Activated CD8-positive, alpha-beta T cell treated with anti-CD3 and anti-CD28 coated beads, Interleukin-2, amount 10 ng/mL, durations not matched to agents 7 days and 5 days (primary cell): ENCODE measurements at regions of chr18 and their contacts with region 1.

Region 1: DNA sequence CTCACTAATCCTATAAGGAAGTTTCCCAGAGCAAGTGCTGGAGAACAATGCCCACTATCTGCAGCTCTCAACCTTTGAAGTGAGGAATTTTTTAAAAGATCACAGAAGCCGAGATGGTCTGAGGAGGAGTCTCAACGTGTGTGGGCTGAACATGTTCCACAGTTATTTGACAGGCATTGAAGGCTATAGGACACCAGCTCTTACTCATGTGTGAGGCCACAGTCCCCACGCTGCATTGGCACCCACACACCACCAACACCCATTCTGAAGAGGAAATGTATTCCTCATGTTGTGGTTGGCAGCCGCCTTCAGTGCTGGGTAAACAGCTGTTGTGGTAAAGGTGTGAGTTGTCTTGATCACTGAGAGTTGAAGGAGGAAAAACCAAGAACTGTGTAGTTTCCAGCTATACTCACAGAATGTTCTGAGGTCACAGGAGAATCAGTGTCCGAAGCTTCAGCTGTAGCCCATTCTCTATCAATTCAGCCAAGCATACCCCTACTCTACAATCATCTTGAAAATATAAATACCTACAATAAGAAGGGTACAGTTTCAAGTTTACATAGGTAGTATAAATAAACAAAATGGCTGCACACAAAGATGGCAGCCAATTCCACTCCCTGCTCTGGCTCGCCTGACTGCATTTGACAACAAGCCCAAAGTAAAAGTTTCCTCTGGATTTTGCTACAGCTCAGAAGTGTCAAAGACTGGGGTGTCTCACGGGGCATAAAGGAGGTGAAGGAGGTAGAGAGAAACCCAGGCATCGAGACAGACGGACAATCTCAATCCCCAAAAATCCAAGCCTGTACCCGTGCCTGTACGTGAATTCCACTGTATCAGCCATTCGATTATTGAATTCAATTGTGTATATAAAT is 12.1 kb downstream of the CD226 start:
- DNase-seq: peak; percentile 90
- ATAC-seq: peak; percentile 96
- H3K4me3 Mint-ChIP-seq: no peak overlapping the region
- H3K27ac Mint-ChIP-seq: no peak overlapping the region
- H3K4me1 Mint-ChIP-seq: peaks cover 16% of the 10 kb centered on the region
- H3K27me3 Mint-ChIP-seq: no peaks in the 10 kb centered on the region

Region 2: DNA sequence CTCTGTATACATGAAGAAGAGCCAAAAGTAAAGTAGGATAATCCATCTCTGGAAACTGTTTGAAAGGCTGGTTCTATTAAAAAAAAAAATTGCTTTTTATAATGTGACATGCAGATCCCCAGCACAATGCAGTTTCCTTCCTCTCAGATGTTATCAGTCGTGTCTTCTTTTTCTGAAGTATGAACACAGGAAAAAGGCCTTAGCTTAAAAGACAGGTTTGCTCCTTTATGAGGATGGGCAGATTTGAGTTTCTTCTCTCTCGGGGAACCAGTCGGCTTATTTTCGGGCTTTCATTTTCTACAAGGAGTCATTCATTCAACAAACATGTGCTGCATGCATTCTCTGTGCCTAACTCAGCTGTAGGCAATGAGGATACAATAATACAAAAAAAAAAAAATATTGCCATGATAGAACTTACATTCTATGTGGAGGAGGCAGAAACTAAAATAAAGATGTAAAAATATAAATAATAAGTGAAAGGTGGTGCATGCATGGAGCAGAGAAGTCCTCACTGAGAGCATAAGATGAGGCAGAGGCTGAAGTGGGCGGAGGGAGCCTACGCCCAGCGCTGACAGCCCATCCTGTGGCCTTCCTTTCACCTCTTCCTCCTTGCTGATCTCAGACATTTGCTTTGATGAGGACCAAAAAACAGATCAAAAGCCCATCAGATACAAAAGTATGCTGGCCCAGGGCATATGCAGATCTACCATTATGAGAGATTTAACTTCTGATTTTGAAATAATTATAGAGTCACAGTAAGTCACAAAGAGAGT is 12.0 kb after region 1 on chr18 and contains the start of gene CD226:
- CTCF ChIA-PET with region 1: interaction called, 33 read pairs
- POLR2A ChIA-PET with region 1: interaction called, 22 read pairs
- DNase-seq: peak; percentile 67
- ATAC-seq: peak; percentile 74
- H3K4me3 Mint-ChIP-seq: no peak within 1 kb of the TSS
- H3K27ac Mint-ChIP-seq: no peak within 1 kb of the TSS
- H3K4me1 Mint-ChIP-seq: peaks cover 45% of the 10 kb centered on the region
- H3K27me3 Mint-ChIP-seq: no peaks in the 10 kb centered on the region
- total RNA-seq, gene CD226: 47.6 to 52.2 TPM

Region 3: GRCh38 chr18:69958422-69958821 is 22.9 kb after region 1 on chr18:
- CTCF ChIA-PET with region 1: interaction called, 11 read pairs
- POLR2A ChIA-PET with region 1: interaction called, 15 read pairs
- DNase-seq: no peak
- ATAC-seq: no peak
- H3K4me3 Mint-ChIP-seq: peak overlapping the region; percentile 3
- H3K27ac Mint-ChIP-seq: peak overlapping the region; percentile 50
- H3K4me1 Mint-ChIP-seq: peaks cover 25% of the 10 kb centered on the region
- H3K27me3 Mint-ChIP-seq: no peaks in the 10 kb centered on the region